ENCODE measurements at regions of chr4 and their contacts with region 1.

Region 1: DNA sequence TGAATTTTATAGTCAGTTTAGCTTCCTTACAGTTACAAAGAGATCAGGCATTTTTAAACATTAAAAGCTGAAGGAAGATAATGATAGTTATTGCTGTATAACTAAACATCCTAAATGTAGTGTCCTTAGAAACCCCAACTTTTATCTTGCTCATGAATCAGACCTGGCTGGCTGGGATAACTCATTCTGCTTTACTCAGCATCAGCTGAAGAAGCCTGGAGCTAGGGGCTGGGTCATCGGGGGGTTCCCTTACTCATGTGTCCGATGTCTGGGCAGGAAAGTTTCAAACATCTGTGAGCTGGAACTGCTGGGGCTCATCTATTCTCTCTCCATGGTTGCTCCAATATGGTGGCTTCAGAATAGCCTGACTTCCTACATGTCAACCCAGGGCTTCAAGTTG is 113.9 kb downstream of the MTNR1A start:
- DNase-seq: no peak
- H3K4me3 ChIP-seq: no peak overlapping the region
- H3K27ac ChIP-seq: no peak overlapping the region
- H3K4me1 ChIP-seq: no peaks in the 10 kb centered on the region
- H3K27me3 ChIP-seq: no peaks in the 10 kb centered on the region
- CTCF ChIP-seq: no peak
- POLR2A ChIP-seq: no peak

Region 2: GRCh38 chr4:186216465-186217024 is 225.0 kb before region 1 on chr4:
- intact Hi-C with region 1: no loop called
- DNase-seq: no peak
- H3K4me3 ChIP-seq: no peak overlapping the region
- H3K27ac ChIP-seq: no peak overlapping the region
- H3K4me1 ChIP-seq: no peaks in the 10 kb centered on the region
- H3K27me3 ChIP-seq: no peaks in the 10 kb centered on the region
- CTCF ChIP-seq: no peak
- POLR2A ChIP-seq: no peak

Region 3: DNA sequence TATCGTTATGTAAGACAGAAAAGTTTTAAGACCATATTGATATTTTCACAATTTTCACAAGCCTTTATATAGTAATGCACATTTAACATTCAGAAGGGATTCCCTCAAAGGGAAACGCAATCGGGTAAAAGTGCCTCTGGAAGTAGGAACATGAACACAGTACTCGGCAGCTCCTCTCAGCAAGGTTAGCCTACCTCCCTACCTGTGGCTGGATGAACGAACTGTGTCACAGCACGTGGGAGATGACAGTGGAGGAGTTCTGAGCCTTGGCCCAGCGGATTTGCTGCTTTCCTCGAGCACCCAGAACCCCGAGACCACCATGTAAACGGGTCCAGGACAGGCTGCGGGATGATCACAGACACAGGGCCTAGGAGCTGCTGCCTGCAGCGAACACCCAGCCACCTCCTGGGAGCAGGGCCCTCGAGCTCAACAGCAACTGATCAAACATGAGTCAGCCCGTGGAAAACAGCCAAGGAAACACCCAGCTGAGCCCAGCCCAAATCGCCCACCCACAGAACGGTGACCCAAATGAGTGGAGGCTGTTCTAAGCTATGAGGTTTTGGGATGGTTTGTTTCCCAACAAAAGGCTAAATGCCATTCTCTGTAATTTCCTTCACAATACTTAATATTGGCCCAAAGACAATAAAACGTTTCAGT is 251.8 kb after region 1 on chr4:
- intact Hi-C with region 1: no loop called
- DNase-seq: peak in 1 of 2 donors; percentile 78
- H3K4me3 ChIP-seq: no peak overlapping the region
- H3K27ac ChIP-seq: peak overlapping the region; percentile 70 to 75
- H3K4me1 ChIP-seq: peaks cover 0 to 4% of the 10 kb centered on the region in 2 donors
- H3K27me3 ChIP-seq: no peaks in the 10 kb centered on the region
- CTCF ChIP-seq: no peak
- POLR2A ChIP-seq: no peak

Region 4: GRCh38 chr4:187232196-187232595 is 790.7 kb after region 1 on chr4:
- intact Hi-C with region 1: loop called (anchors 5 kb)
- DNase-seq: no peak
- H3K4me3 ChIP-seq: no peak overlapping the region
- H3K27ac ChIP-seq: no peak overlapping the region
- H3K4me1 ChIP-seq: no peaks in the 10 kb centered on the region
- H3K27me3 ChIP-seq: no peaks in the 10 kb centered on the region
- CTCF ChIP-seq: no peak
- POLR2A ChIP-seq: no peak

Measured in breast epithelium (tissue), 4 donors.